Mammary epithelial cell (primary cell): ENCODE measurements at regions of chr1 and their contacts with region 1.

Region 1: GRCh38 chr1:158724442-158724841 is 3.9 kb upstream of the OR6K3 start:
- DNase-seq: no peak
- H3K4me3 ChIP-seq: no peak overlapping the region
- H3K27ac ChIP-seq: no peak overlapping the region
- H3K4me1 ChIP-seq: no peaks in the 10 kb centered on the region
- H3K27me3 ChIP-seq: peaks cover 2% of the 10 kb centered on the region
- CTCF ChIP-seq: no peak

Region 2: DNA sequence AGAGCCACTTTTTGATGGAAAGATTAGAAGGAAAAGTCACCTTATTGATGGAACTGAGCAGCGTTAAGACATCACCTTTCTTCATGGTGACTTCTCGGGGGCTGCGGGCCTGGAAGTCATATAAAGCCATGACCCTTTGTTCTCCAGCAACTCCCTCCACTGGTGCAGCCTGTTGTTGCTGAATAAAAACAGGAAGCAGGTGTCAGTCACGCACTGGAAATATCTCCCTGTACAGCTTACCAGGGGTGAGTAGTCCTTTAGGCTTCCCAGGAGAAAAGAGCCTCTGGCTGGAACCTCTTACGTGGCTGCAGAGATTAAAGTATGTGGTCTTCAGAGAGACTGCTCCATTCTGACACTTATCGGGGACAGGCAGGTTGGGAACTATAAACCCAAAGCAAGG is 69.9 kb before region 1 on chr1:
- CTCF ChIA-PET with region 1: no interaction called
- dilution Hi-C with region 1: loop called (anchors 5 kb)
- in situ Hi-C with region 1: no loop called
- intact Hi-C with region 1: no loop called
- DNase-seq: no peak
- H3K4me3 ChIP-seq: no peak overlapping the region
- H3K27ac ChIP-seq: no peak overlapping the region
- H3K4me1 ChIP-seq: no peaks in the 10 kb centered on the region
- H3K27me3 ChIP-seq: no peaks in the 10 kb centered on the region
- CTCF ChIP-seq: no peak